ENCODE measurements at regions of chr15 and their contacts with region 1.

Region 1: DNA sequence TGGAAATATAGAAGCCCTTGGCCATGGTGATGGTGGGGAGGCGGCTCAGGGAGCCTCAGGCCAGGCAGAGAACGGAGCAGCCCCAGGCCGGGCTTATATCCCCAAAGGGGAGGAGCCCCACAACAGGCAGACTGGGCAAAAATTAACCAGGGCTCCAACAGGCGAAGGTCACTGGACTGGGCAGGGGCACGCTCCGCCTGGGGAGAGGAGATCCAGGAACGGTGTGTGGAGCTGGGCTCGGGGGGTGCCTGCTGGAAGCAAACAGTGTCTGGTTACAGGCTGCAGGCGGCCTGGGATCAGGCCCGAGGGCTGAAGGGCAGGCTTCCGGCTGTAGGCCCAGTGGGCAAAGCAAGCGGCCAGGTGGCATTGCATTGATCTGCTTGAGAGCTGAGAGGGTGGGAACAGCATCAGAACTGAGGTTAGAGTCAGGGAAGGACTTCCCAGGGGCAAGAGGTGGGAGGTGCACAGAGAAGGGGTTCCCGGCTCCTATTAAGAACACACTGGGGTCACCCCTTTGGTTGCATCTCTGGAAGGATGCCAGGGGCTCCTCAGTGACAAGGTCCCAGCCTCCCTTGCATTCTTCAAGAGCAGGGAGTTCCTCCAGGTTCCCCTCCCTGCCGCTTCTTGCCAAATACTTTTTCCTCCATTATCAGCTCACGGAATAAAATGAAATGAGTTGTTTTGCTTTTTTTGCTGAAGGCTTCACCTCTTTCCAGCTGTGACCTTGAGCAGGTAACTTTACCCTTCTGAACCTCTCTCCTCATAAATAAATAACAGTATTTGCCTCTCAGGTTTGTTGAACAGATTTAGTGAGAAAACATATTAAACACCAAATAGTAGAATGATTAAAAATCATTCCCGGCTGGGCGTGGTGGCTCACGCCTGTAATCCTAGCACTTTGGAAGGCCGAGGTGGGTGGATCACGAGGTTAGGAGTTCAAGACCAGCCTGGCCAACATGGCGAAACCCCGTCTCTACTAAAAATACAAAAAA is 7.8 kb downstream of the ANPEP start:
- DNase-seq: peak; percentile 92
- ATAC-seq: peak; percentile 94
- H3K4me3 ChIP-seq: peak overlapping the region in 1 of 3 experiments; percentile 52; a peak in 2 of 6 replicates
- H3K27ac ChIP-seq: peak overlapping the region; percentile 86
- H3K4me1 ChIP-seq: peaks cover 78% of the 10 kb centered on the region
- H3K27me3 ChIP-seq: no peaks in the 10 kb centered on the region
- CTCF ChIP-seq: peak; percentile 37
- EP300 ChIP-seq: peak in 1 of 2 experiments; percentile 61; a peak in 1 of 4 replicates
- POLR2A ChIP-seq: peak in 1 of 2 experiments; percentile 62; a peak in 2 of 4 replicates
- RAD21 ChIP-seq: peak; percentile 53; the same call in 1 of the 2 replicates

Region 2: DNA sequence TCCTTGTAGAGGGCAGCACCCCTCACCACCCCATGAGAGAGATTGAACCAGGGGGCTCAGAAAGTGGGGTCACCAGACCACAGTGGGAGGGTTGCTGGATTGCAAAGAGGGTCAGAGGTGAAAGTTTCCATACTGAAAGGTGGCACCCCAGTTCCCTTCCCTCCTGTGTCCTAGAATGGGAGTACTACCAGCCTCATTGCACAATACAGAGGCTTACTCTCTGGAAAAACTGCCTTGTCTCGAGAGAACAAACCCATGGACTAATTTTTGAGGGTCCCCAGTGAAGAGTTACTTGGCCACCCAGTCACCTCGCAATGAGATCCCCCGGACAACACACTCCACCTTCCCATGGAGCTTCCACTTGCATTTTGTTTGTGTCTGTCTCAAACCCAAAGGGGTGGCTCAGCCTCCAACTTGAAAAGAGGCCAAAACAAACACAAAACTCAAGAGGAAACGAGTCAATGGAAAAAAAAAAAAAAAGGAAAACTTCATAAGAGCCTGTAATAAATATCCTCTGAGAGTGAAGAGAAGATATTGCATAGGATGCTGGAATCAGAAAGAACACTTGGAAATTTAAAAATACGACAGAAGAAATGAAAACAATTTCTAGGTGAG is 12.1 kb before region 1 on chr15:
- CTCF ChIA-PET with region 1: no interaction called
- POLR2A ChIA-PET with region 1: interaction called, 12 read pairs
- in situ Hi-C with region 1: no loop called
- intact Hi-C with region 1: no loop called
- DNase-seq: no peak
- ATAC-seq: no peak
- H3K4me3 ChIP-seq: no peak overlapping the region
- H3K27ac ChIP-seq: no peak overlapping the region
- H3K4me1 ChIP-seq: peaks cover 17% of the 10 kb centered on the region
- H3K27me3 ChIP-seq: no peaks in the 10 kb centered on the region
- CTCF ChIP-seq: no peak
- EP300 ChIP-seq: no peak
- POLR2A ChIP-seq: no peak
- RAD21 ChIP-seq: no peak

Region 3: DNA sequence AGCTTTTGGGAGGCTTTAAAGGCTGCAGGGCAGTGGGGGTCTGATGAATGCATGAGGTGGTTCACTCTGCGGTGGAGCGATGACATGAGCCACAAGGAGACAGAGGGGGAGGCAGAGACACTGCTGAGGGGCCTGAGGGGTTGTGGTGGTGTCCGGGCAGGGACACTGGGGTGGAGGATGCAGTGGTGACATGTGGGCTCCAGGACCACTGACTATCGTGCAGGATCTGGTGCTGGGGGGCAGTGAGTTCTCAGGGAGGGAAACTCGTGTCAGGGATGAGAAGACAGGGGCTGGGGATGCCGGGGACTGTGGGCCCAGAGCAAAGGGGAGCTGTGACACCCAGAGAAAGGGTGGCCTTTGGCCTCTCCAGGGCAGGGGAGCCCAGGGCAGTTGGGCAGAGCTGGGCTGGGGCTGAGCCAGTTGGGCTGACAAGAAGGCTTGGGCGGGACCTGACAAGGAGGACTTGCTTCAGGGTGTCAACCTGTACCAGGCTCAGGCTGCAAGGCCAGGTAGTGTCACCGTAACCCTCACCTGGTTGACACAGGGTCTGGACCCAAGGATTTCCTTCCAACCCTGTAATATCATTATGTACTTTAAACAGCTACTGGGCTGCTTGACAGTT is 20.9 kb after region 1 on chr15:
- CTCF ChIA-PET with region 1: no interaction called
- POLR2A ChIA-PET with region 1: interaction called, 5 read pairs
- in situ Hi-C with region 1: no loop called
- intact Hi-C with region 1: loop called (anchors 2 kb)
- DNase-seq: no peak
- ATAC-seq: peak; percentile 31
- H3K4me3 ChIP-seq: peak overlapping the region in 2 of 3 experiments; percentile 31 to 47; a peak in 3 of 6 replicates
- H3K27ac ChIP-seq: no peak overlapping the region
- H3K4me1 ChIP-seq: peaks cover 52% of the 10 kb centered on the region
- H3K27me3 ChIP-seq: peaks cover 0 to 9% of the 10 kb centered on the region in 2 experiments; a peak in 1 of 5 replicates
- CTCF ChIP-seq: no peak
- EP300 ChIP-seq: no peak
- POLR2A ChIP-seq: no peak
- RAD21 ChIP-seq: no peak

Measured in HepG2 (cell line).